ENCODE measurements at regions of chr16 and their contacts with region 1.

Region 1: GRCh38 chr16:88619859-88620815 is 18.2 kb upstream of the IL17C start:
- DNase-seq: peak; percentile 86
- ATAC-seq: peak; percentile 83
- H3K4me3 Mint-ChIP-seq: peak overlapping the region; percentile 55
- H3K27ac Mint-ChIP-seq: peak overlapping the region; percentile 91
- H3K4me1 Mint-ChIP-seq: peaks cover 33% of the 10 kb centered on the region
- H3K27me3 Mint-ChIP-seq: no peaks in the 10 kb centered on the region

Region 2: GRCh38 chr16:88633684-88634140 is 13.6 kb after region 1 on chr16:
- CTCF ChIA-PET with region 1: interaction called, 11 read pairs
- POLR2A ChIA-PET with region 1: interaction called, 8 read pairs
- DNase-seq: peak; percentile 66
- ATAC-seq: peak; percentile 19
- H3K4me3 Mint-ChIP-seq: peak overlapping the region; percentile 74
- H3K27ac Mint-ChIP-seq: peak overlapping the region; percentile 77
- H3K4me1 Mint-ChIP-seq: peaks cover 46% of the 10 kb centered on the region
- H3K27me3 Mint-ChIP-seq: peaks cover 13% of the 10 kb centered on the region